Left ventricle myocardium inferior (tissue), 1 donor: ENCODE measurements at regions of chr11 and their contacts with region 1.

Region 1: DNA sequence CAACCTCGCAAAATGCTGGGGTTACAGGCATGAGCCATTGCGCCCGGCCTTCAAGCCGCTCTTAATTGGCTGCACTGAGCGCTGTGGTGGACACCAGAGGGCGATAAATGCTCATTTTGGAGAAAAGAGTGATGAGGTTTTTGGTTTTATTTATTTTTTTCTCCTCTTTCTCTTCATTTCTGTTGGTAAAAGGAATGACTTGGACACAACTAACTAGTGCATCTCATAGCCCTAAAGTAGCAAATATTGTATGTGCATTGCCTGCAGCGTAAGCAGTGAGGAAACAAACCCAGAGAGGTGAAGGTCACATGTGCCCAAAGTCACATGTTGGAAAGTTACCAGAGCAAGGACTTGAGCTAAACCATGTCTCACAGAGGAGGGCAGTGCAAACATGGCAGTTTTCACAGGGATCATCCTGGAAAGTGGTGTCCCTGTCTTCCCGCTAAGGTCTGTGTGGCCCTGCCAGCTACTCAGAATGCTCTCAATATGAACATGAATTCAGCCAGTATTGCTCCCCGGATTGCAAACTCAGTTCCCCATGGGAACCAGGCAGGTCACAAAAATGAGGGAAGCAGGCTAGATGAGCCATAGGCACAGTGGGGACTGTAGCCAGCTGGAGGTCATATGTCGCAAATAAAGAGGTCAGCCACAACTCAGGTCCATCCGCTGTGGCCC is 8.6 kb upstream of the CD82 start:
- DNase-seq: peak; percentile 62
- H3K4me3 ChIP-seq: no peak overlapping the region
- H3K27ac ChIP-seq: peak overlapping the region; percentile 24
- H3K4me1 ChIP-seq: peaks cover 7% of the 10 kb centered on the region
- H3K27me3 ChIP-seq: no peaks in the 10 kb centered on the region
- CTCF ChIP-seq: peak; percentile 87

Region 2: DNA sequence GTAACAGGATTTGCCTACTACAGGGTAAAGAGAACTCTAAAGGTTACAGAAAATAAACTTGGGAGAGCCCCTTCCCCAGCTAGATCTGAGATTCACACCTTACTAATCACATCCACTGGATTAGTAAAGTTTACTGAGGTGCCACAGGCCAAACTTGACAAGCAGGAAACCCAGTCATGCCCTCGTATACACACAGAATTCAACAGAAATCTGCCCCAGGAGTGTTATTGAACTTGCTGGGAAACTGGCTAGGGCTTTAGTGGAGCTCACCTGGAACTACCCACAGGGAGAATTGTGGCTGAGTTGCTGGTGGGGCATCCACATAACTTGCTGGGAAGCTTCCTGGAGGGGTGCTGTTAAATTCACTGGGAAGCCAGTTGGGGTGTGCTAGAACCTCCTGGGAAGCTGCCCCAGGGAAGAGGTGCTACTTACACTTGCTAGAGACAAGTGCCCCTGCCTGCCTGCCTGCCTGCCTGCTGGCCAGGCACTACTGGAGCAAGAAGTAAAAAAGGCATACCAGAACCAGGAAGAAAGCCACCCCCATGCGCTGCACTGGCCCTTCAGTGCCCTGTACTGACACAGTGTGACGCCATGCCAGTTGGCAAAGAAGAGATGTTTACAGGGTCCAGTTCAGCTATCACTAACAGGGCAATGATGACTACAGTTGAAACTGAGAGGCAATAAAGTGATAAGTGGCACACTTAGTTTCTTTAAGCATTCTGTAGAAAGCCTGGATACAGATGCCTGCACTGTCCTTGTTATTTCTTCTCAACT is 353.4 kb before region 1 on chr11:
- intact Hi-C with region 1: no loop called
- DNase-seq: peak; percentile 24
- H3K4me3 ChIP-seq: no peak overlapping the region
- H3K27ac ChIP-seq: no peak overlapping the region
- H3K4me1 ChIP-seq: peaks cover 29% of the 10 kb centered on the region
- H3K27me3 ChIP-seq: no peaks in the 10 kb centered on the region
- CTCF ChIP-seq: no peak

Region 3: GRCh38 chr11:44615913-44616791 is 59.3 kb after region 1 on chr11:
- intact Hi-C with region 1: loop called (anchors 1 kb)
- DNase-seq: peak; percentile 4
- H3K4me3 ChIP-seq: no peak overlapping the region
- H3K27ac ChIP-seq: no peak overlapping the region
- H3K4me1 ChIP-seq: peaks cover 61% of the 10 kb centered on the region
- H3K27me3 ChIP-seq: no peaks in the 10 kb centered on the region
- CTCF ChIP-seq: no peak

Region 4: GRCh38 chr11:44911029-44911814 is 354.4 kb after region 1 on chr11:
- intact Hi-C with region 1: loop called (anchors 10 kb)
- DNase-seq: peak; percentile 76
- H3K4me3 ChIP-seq: no peak overlapping the region
- H3K27ac ChIP-seq: peak overlapping the region; percentile 58
- H3K4me1 ChIP-seq: peaks cover 60% of the 10 kb centered on the region
- H3K27me3 ChIP-seq: no peaks in the 10 kb centered on the region
- CTCF ChIP-seq: peak; percentile 90